Mucosa of descending colon (tissue), 3 donors: ENCODE measurements at regions of chr4 and their contacts with region 1.

Region 1: DNA sequence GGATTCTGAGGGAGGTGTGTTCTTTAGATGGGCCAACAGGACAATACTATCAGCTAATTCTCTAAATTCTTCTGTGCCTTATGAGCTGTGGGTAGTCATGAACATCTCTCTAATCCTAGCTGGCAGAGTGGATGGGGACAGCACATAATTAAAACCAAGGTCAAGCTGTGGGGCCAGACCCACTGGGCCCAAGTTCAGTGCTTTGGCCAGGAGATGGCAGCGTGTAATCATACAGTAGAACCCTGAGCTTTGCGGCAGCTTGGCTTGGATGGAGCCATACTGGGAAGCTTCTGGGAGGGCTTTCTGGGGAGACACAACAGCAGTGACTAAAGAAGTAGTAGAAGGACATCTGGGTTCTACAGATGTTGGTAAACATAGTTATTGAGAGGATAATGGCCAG is 140.3 kb upstream of the CXCL13 start:
- DNase-seq: peak in 2 of 3 donors; percentile 42 to 47
- ATAC-seq: peak; percentile 76
- H3K4me3 ChIP-seq: no peak overlapping the region
- H3K4me1 ChIP-seq: no peaks in the 10 kb centered on the region
- CTCF ChIP-seq: no peak

Region 2: DNA sequence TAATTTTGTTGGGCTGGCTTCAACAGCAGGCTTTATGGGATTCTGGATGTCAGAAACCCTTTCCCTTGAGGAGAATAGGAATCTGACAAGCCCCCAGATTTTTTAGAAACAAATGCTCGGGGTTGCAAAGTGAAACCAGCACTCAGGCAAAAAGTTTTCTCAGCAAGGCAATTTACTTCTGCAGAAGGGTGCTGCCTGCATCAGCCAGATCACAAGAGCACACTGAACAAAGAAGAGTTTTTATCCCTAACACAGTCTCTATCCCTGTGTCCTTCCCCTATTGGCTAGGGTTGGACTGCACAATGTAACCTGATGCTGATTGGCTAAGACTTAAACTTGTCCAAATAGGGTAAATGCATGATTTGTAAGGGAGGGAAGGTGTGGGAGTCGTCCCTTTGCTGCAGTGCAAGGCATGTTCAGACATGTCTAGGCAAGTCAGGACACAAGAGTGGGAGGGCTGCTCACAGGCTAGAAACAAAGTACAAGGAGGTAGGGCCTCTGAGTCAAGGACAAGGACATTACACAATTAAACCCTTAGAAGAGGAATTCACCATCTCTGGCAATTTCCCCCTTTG is 132.5 kb before region 1 on chr4:
- intact Hi-C with region 1: no loop called
- DNase-seq: no peak
- ATAC-seq: no peak
- H3K4me3 ChIP-seq: no peak overlapping the region
- H3K4me1 ChIP-seq: no peaks in the 10 kb centered on the region
- CTCF ChIP-seq: no peak

Region 3: DNA sequence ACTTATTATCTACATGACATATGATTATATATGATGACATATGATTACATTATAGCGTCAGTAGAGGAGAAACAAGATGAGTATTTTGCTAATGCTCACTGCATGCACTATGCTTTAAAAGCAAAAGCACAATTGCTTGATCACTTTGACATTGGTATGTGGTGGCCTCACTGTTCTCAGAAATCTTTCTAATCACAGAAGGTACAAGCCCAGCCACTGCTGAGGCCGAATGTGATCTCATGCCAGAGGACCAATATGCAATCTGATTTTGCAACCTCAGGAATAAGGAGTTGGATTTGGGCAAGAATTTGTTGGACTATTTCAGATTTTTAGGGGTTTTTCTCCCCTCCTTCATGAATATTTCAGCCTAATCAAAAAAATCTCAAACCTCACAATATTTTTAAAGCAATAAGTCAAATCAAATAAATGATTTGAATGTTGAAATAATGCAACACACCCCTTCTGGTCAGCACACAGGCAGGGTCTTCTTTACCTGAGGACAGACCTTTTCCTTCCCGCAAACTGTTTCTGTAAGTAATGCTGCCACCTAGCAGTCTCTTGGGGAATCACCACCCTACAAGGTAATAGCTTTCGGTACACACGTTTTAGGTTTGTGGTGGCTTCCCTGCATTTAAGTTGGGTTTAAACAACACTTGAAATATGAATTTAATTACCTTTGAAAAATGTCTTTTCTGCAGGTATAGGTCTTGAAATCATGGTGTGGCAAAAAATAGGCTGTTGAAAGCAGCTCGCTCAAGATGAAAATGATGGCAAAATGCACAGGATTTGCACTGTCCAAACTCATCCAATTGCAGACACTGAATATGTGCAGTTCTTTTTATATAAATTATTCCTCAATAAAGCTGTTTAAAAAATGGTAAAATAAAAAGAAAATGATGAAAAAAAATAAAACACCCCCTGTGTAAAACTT is 135.5 kb after region 1 on chr4:
- intact Hi-C with region 1: loop called in 1 of 2 experiments (anchors 10 kb)
- DNase-seq: peak in 1 of 3 donors; percentile 50
- ATAC-seq: peak; percentile 66
- H3K4me3 ChIP-seq: no peak overlapping the region
- H3K4me1 ChIP-seq: no peaks in the 10 kb centered on the region
- CTCF ChIP-seq: peak; percentile 60

Region 4: GRCh38 chr4:77629885-77630284 is 164.6 kb after region 1 on chr4:
- intact Hi-C with region 1: no loop called
- DNase-seq: no peak
- ATAC-seq: no peak
- H3K4me3 ChIP-seq: no peak overlapping the region
- H3K4me1 ChIP-seq: peaks cover 7% of the 10 kb centered on the region
- CTCF ChIP-seq: no peak